Heart left ventricle (tissue), 16 donors: ENCODE measurements at regions of chr2 and their contacts with region 1.

Region 1: GRCh38 chr2:172113617-172114016 is 10.9 kb upstream of the DLX2 start:
- DNase-seq: no peak
- ATAC-seq: peak in 1 of 4 donors; percentile 45
- H3K4me3 ChIP-seq: no peak overlapping the region
- H3K27ac ChIP-seq: no peak overlapping the region
- H3K4me1 ChIP-seq: no peaks in the 10 kb centered on the region
- H3K27me3 ChIP-seq: peaks cover 2 to 63% (median 20%) of the 10 kb centered on the region in 9 donors
- CTCF ChIP-seq: peak in 11 of 12 donors; percentile 8 to 54 (median 35)
- POLR2A ChIP-seq: no peak

Region 2: GRCh38 chr2:171574149-171574795 is 539.3 kb before region 1 on chr2:
- intact Hi-C with region 1: loop called in 7 of 10 experiments (anchors 5 to 10 kb)
- DNase-seq: peak; percentile 73 to 91 (median 80)
- ATAC-seq: peak; percentile 66 to 97 (median 96)
- H3K4me3 ChIP-seq: peak overlapping the region in 2 of 12 donors; percentile 1 to 5
- H3K27ac ChIP-seq: no peak overlapping the region
- H3K4me1 ChIP-seq: no peaks in the 10 kb centered on the region
- H3K27me3 ChIP-seq: peaks cover 0 to 5% (median 0%) of the 10 kb centered on the region in 9 donors
- CTCF ChIP-seq: peak; percentile 95 to 99 (median 98)
- POLR2A ChIP-seq: no peak

Region 3: DNA sequence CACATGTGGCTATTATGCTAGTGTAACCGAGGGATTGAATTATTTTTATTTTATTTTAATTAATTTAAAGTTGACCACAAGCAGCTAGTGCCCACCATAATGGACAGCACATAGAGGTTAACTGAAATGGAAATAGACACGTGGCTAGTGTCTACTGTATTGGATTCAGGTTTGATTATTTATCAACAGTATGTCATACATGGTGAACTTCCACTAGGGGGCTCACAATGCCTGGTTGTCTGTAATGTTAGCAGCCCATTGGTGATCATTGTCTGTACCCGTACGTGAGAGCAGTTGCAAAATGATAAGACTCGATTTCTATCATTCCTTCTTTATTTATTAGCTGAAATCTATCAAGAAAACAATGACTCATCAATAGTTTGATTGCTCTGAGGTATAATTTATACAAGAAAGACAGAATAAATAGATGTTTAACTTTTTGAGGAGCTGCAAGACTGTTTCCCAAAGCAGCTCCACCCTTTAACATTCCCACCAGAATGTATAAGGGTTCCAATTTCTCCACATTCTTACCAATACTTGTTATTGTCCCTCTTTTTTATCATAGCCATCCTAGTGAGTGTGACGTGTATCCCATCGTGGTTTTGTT is 514.8 kb before region 1 on chr2:
- intact Hi-C with region 1: loop called in 5 of 10 experiments (anchors 5 to 10 kb)
- DNase-seq: peak in 1 of 5 donors; percentile 22
- ATAC-seq: peak; percentile 54 to 84 (median 66)
- H3K4me3 ChIP-seq: no peak overlapping the region
- H3K27ac ChIP-seq: no peak overlapping the region
- H3K4me1 ChIP-seq: peaks cover 0 to 3% (median 0%) of the 10 kb centered on the region in 12 donors
- H3K27me3 ChIP-seq: peaks cover 0 to 24% (median 0%) of the 10 kb centered on the region in 9 donors
- CTCF ChIP-seq: peak; percentile 60 to 83 (median 72)
- POLR2A ChIP-seq: no peak

Region 4: DNA sequence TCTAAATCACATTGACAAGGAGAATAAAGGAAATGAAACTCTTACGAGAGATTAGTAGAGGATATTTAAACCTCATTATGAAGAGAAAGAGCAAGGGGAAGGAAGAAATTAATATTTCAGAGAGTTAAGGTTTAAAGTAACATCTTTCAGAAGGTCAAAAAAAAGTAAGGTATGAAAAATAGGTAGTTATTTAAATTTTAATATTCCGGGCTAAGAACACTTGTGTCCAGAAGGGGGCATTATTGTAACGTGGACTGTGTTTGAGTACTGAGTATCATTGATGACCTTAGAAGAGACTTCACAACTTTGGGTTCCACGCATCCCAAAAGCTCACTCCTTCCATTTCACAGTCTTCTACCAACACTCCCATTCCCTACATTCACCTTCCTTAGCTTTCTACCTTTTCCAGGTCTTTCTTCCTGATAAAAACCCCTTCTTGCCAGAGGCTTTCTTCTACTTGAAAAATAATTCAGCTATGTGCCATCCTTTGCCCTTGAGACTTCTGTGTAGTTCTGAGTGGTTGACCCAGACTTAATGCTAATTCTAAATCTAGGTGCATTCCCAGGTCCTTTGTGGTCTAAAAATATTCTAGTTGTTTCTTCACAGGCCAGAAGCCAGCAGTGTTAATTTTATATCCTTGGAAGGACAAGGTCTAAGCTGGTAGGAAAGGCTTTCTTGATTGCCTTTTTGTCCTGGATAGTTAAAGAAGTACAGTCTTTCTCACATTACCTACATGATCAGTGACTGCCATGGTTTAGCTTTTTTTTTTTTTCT is 409.9 kb before region 1 on chr2:
- intact Hi-C with region 1: loop called in 5 of 10 experiments (anchors 5 to 10 kb)
- DNase-seq: no peak
- ATAC-seq: peak; percentile 20 to 75 (median 52)
- H3K4me3 ChIP-seq: no peak overlapping the region
- H3K27ac ChIP-seq: peak overlapping the region in 10 of 12 donors; percentile 9 to 69 (median 43)
- H3K4me1 ChIP-seq: peaks cover 0 to 41% (median 16%) of the 10 kb centered on the region in 12 donors
- H3K27me3 ChIP-seq: no peaks in the 10 kb centered on the region
- CTCF ChIP-seq: peak; percentile 17 to 58 (median 38)
- POLR2A ChIP-seq: no peak